PC-9 (cell line): ENCODE measurements at regions of chr7 and their contacts with region 1.

Region 1: GRCh38 chr7:93180704-93181103 is 32.5 kb upstream of the SAMD9L start:
- DNase-seq: no peak
- H3K4me3 ChIP-seq: no peak overlapping the region
- H3K27ac ChIP-seq: no peak overlapping the region
- H3K4me1 ChIP-seq: no peaks in the 10 kb centered on the region
- H3K27me3 ChIP-seq: no peaks in the 10 kb centered on the region
- CTCF ChIP-seq: no peak

Region 2: DNA sequence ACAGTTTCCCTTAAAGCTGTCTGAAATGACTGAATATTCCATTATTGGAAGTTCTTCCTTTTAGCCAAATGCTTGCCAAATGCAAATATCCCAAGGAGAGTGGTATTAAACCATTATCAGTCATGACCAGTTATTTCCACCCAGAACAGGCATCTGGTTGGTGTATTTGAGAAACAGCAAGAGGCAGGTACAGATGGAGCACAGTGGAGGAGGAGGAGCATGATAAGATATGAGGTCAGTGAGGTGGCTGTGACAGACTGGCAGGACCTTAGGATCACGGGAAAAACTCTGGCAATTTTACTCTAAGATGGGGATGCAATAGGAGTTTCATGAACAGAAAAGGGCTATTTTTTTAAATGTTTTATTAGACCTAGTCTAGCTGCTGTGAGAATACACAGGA is 39.2 kb after region 1 on chr7:
- CTCF ChIA-PET with region 1: no interaction called
- POLR2A ChIA-PET with region 1: no interaction called
- intact Hi-C with region 1: loop called (anchors 5 kb)
- DNase-seq: no peak
- H3K4me3 ChIP-seq: no peak overlapping the region
- H3K27ac ChIP-seq: no peak overlapping the region
- H3K4me1 ChIP-seq: no peaks in the 10 kb centered on the region
- H3K27me3 ChIP-seq: no peaks in the 10 kb centered on the region
- CTCF ChIP-seq: no peak